ENCODE measurements at regions of chr19 and their contacts with region 1.

Region 1: DNA sequence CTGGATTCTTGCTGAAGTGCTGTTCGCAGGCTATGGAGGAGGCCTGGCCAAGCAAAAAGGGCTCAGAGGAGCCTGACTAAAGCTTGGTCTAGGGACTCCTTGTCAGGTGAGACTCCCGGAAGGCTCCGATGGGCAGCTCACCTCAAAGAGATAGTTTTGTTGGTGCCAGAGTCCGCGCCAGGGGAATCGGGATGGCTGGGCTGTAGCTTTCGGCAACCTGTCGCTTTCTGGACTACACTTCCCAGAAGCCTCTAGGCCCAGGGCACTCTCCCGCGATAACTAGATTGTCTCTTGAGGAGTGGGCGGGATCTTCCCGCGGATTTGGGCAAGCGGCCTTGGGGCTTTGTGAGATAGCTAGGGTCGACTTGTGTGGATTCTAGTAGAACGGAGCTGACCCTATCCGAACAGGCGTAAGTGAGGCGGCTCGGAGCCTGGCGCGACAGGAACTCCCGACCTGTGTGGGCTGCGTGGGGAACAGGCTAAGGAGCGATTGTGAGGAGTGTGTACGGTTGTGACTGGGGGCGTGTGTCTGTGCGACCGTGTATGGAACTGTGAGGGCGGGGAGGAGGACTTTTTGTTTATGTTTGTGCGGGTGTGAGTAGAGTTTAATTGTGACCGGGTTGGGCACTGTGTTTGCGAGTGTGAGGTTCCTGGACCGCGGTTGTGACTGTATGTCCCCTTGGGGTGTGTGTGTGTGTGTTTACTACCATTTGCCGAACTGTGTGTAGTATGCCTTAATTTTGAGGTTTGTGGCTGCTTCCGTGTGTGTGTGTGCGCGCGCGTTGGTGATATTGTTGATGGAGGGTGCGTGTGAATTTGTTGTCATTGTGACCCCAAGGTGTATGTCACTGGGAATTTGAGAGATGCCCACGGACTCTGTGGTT is at the start of gene ZNF345:
- DNase-seq: peak; percentile 69 to 94 (median 79)
- ATAC-seq: peak; percentile 81
- H3K4me3 ChIP-seq: peak within 1 kb of the TSS; percentile 83
- H3K4me3 Mint-ChIP-seq: no peak within 1 kb of the TSS
- H3K27ac ChIP-seq: peak within 1 kb of the TSS; percentile 71 to 86
- H3K27ac Mint-ChIP-seq: no peak within 1 kb of the TSS
- H3K4me1 ChIP-seq: peaks cover 29% of the 10 kb centered on the region
- H3K4me1 Mint-ChIP-seq: peaks cover 15% of the 10 kb centered on the region
- H3K27me3 ChIP-seq: no peaks in the 10 kb centered on the region
- H3K27me3 Mint-ChIP-seq: no peaks in the 10 kb centered on the region
- CTCF ChIP-seq: no peak
- total RNA-seq, gene ZNF345: 5.9 to 7.1 TPM

Region 2: DNA sequence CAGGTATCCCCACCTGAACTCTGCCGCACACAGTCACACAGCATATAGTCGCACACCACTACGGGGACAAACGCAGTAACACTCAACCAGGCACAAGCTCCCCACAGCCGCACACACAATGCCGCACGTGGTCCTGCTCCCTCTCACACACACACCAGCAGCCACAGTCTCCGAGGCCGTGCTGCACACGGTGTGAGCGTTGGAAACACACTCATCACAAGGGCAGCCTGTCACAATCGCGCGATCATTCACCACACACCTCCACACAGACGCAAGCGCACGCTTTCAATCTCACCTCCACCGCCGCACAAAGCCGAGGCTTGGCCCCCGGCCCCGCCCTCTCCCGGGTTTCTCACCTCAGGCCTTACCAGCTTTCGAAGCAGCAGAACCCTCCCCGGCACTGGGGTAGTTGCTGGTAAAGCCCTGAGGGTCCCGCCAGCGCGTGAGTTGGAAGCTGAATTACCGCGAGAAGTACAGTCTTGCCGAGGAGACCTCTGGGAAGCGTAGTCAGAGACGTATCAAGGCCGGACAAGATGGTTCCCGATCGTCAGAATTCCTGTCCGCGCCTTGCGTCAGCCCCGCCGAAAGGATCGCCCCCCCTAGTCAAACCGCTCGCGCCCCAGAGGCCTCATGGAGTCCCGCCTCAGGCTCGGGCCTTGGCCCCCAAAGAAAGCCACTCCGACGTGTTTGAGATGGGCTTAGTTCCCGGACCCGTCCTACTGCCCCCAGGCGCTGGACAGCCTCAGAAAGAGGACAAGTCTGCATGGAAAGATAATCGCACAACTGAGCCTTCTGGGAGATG is 361.5 kb before region 1 on chr19 and contains the start of gene ZNF566:
- CTCF ChIA-PET with region 1: interaction called, 3 read pairs
- POLR2A ChIA-PET with region 1: interaction called, 14 read pairs
- intact Hi-C with region 1: no loop called
- DNase-seq: peak; percentile 84 to 97 (median 89)
- ATAC-seq: peak; percentile 90
- H3K4me3 ChIP-seq: peak within 1 kb of the TSS; percentile 64
- H3K4me3 Mint-ChIP-seq: peak within 1 kb of the TSS; percentile 97
- H3K27ac ChIP-seq: peak within 1 kb of the TSS; percentile 84 to 87
- H3K27ac Mint-ChIP-seq: peak within 1 kb of the TSS; percentile 99
- H3K4me1 ChIP-seq: peaks cover 19% of the 10 kb centered on the region
- H3K4me1 Mint-ChIP-seq: peaks cover 36% of the 10 kb centered on the region
- H3K27me3 ChIP-seq: no peaks in the 10 kb centered on the region
- H3K27me3 Mint-ChIP-seq: no peaks in the 10 kb centered on the region
- CTCF ChIP-seq: no peak
- total RNA-seq, gene ZNF566: 6.3 to 6.8 TPM

Region 3: DNA sequence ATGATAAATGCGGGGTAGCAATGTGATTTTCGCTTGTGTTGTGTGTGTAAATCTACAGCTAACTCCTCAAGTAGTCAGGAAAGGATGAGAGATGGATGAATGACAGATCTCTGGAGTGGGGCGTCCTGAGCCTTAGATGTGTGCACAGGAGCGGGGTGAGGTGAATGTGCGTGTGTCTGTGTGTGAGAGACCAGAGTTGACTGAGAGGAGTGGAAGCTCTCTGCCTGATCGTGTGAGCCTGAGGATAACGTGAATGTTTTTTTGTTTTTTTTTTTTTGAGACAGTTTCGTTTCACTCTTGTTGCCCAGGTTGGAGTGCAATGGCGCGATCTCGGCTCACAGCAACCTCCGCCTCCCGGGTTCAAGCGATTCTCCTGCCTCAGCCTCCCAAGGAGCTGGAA is 185.0 kb before region 1 on chr19:
- CTCF ChIA-PET with region 1: no interaction called
- POLR2A ChIA-PET with region 1: interaction called, 4 read pairs
- intact Hi-C with region 1: loop called (anchors 2 to 10 kb)
- DNase-seq: no peak
- ATAC-seq: no peak
- H3K4me3 ChIP-seq: peak overlapping the region; percentile 97
- H3K4me3 Mint-ChIP-seq: peak overlapping the region; percentile 98
- H3K27ac ChIP-seq: no peak overlapping the region
- H3K27ac Mint-ChIP-seq: peak overlapping the region; percentile 92
- H3K4me1 ChIP-seq: peaks cover 24% of the 10 kb centered on the region
- H3K4me1 Mint-ChIP-seq: peaks cover 45% of the 10 kb centered on the region
- H3K27me3 ChIP-seq: no peaks in the 10 kb centered on the region
- H3K27me3 Mint-ChIP-seq: no peaks in the 10 kb centered on the region
- CTCF ChIP-seq: no peak

Region 4: DNA sequence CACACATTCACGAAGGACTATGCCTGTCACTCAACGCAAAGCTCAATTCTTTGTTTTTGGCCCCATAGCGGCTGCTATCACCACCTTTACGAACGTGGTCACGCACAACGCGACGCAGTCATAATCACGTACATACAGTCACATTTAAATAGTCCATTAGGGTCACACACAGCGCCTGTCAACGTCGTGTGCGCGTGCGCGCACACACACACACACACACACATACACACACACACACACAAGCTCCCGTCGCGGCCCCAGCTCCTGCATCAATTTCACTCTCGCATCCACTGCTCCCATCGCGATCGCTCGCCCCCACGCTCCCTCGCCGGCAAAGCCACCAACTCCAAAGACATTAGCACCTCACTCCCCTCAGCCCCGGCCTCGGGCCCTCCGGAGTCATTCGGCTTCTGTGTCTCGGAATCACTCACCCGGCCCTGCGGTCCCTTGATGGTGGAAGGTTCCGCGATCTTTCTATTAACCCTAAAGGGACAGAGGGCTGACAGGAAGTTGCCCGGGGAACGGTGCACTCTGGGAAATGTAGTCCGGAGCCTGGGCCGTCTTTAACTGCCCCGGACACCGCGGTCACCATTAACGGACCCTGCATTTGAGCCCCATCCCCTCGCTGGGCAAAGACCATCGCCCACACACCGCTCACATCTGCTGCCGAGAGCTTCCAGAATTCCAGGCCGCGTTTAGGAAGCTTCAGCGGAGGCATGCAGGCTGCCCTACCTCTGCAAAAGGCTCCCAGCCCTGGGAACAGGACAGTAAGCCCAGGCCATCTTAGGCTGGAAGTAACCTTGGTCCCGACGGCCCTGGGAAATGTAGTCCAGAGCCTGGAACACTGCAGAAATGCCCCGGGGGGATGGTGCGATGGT is 12.7 kb before region 1 on chr19 and contains the start of gene ZNF790:
- CTCF ChIA-PET with region 1: interaction called, 13 read pairs
- POLR2A ChIA-PET with region 1: interaction called, 167 read pairs
- intact Hi-C with region 1: loop called (anchors 1 kb)
- DNase-seq: peak; percentile 69 to 91 (median 78)
- ATAC-seq: peak; percentile 88
- H3K4me3 ChIP-seq: peak within 1 kb of the TSS; percentile 66
- H3K4me3 Mint-ChIP-seq: no peak within 1 kb of the TSS
- H3K27ac ChIP-seq: peak within 1 kb of the TSS; percentile 81 to 90
- H3K27ac Mint-ChIP-seq: no peak within 1 kb of the TSS
- H3K4me1 ChIP-seq: peaks cover 18% of the 10 kb centered on the region
- H3K4me1 Mint-ChIP-seq: peaks cover 9% of the 10 kb centered on the region
- H3K27me3 ChIP-seq: no peaks in the 10 kb centered on the region
- H3K27me3 Mint-ChIP-seq: no peaks in the 10 kb centered on the region
- CTCF ChIP-seq: no peak
- total RNA-seq, gene ZNF790: 2.9 to 3.5 TPM

Region 5: GRCh38 chr19:36987091-36987490 is 136.3 kb after region 1 on chr19:
- CTCF ChIA-PET with region 1: no interaction called
- POLR2A ChIA-PET with region 1: no interaction called
- intact Hi-C with region 1: no loop called
- DNase-seq: no peak
- ATAC-seq: no peak
- H3K4me3 ChIP-seq: no peak overlapping the region
- H3K4me3 Mint-ChIP-seq: no peak overlapping the region
- H3K27ac ChIP-seq: no peak overlapping the region
- H3K27ac Mint-ChIP-seq: no peak overlapping the region
- H3K4me1 ChIP-seq: no peaks in the 10 kb centered on the region
- H3K4me1 Mint-ChIP-seq: no peaks in the 10 kb centered on the region
- H3K27me3 ChIP-seq: no peaks in the 10 kb centered on the region
- H3K27me3 Mint-ChIP-seq: no peaks in the 10 kb centered on the region
- CTCF ChIP-seq: no peak

Region 6: GRCh38 chr19:37217855-37218591 is 367.2 kb after region 1 on chr19 and contains the start of gene ZNF383:
- CTCF ChIA-PET with region 1: interaction called, 3 read pairs
- POLR2A ChIA-PET with region 1: interaction called, 6 read pairs
- intact Hi-C with region 1: loop called in 1 of 2 experiments (anchors 5 kb)
- DNase-seq: peak; percentile 66 to 90 (median 78)
- ATAC-seq: peak; percentile 81
- H3K4me3 ChIP-seq: peak within 1 kb of the TSS; percentile 94
- H3K4me3 Mint-ChIP-seq: peak within 1 kb of the TSS; percentile 93
- H3K27ac ChIP-seq: peak within 1 kb of the TSS; percentile 81 to 90
- H3K27ac Mint-ChIP-seq: peak within 1 kb of the TSS; percentile 89
- H3K4me1 ChIP-seq: peaks cover 14% of the 10 kb centered on the region
- H3K4me1 Mint-ChIP-seq: peaks cover 42% of the 10 kb centered on the region
- H3K27me3 ChIP-seq: no peaks in the 10 kb centered on the region
- H3K27me3 Mint-ChIP-seq: no peaks in the 10 kb centered on the region
- CTCF ChIP-seq: no peak
- total RNA-seq, gene ZNF383: 13.1 to 15.7 TPM